ENCODE measurements at regions of chr15 and their contacts with region 1.

Region 1: DNA sequence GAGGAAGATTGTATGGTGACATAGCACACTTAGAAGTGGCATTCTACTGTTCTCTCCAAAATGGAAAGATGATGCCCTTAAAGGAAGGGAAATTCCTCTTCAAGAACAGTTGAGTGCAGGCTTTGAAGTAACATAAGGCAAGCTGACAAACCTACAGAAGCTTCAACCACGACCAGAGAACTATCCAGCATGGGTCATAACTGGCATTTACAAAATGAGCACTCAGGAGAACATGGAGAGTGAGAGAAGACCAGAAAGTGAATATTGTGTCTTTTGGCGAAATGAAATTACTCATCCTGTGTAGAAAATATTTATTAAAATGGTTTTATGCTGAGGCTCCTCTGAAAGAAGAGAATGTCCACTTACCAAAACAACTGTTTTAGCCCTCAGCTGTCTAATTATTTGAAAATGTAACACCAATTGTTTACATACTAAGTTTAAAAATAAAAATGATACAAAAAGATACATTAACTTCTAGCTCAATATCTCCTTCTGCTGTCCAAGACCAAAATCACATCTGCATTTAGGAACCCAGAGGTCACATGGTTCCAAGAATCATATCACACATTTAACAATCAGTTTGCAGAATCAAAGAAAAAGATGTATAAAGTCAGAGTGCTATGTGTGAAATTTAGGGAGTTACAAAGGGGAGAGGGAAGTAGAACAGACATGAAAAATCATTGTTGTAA is 216.9 kb downstream of the ATP8B4 start:
- DNase-seq: peak; percentile 22
- ATAC-seq: peak; percentile 37
- H3K4me3 ChIP-seq: no peak overlapping the region
- H3K27ac ChIP-seq: peak overlapping the region; percentile 53
- H3K4me1 ChIP-seq: peaks cover 27% of the 10 kb centered on the region
- H3K27me3 ChIP-seq: no peaks in the 10 kb centered on the region
- CTCF ChIP-seq: peak; percentile 65; the same call in 1 of the 2 replicates

Region 2: GRCh38 chr15:49235446-49236124 is 666.6 kb before region 1 on chr15:
- CTCF ChIA-PET with region 1: no interaction called
- POLR2A ChIA-PET with region 1: no interaction called
- intact Hi-C with region 1: loop called (anchors 5 kb)
- DNase-seq: peak; percentile 60
- ATAC-seq: peak; percentile 88
- H3K4me3 ChIP-seq: no peak overlapping the region
- H3K27ac ChIP-seq: 0 out of 2 replicates have a peak overlapping the region, but pooled peaks have one; percentile 10
- H3K4me1 ChIP-seq: peaks cover 5% of the 10 kb centered on the region; the same call in 1 of the 2 replicates
- H3K27me3 ChIP-seq: no peaks in the 10 kb centered on the region
- CTCF ChIP-seq: peak; percentile 81

Region 3: GRCh38 chr15:49370782-49371181 is 531.4 kb before region 1 on chr15:
- CTCF ChIA-PET with region 1: no interaction called
- POLR2A ChIA-PET with region 1: no interaction called
- intact Hi-C with region 1: loop called (anchors 2 kb)
- DNase-seq: peak; percentile 52
- ATAC-seq: peak; percentile 27; the same call in 1 of the 2 replicates
- H3K4me3 ChIP-seq: no peak overlapping the region
- H3K27ac ChIP-seq: no peak overlapping the region
- H3K4me1 ChIP-seq: no peaks in the 10 kb centered on the region
- H3K27me3 ChIP-seq: no peaks in the 10 kb centered on the region
- CTCF ChIP-seq: peak; percentile 58

Region 4: DNA sequence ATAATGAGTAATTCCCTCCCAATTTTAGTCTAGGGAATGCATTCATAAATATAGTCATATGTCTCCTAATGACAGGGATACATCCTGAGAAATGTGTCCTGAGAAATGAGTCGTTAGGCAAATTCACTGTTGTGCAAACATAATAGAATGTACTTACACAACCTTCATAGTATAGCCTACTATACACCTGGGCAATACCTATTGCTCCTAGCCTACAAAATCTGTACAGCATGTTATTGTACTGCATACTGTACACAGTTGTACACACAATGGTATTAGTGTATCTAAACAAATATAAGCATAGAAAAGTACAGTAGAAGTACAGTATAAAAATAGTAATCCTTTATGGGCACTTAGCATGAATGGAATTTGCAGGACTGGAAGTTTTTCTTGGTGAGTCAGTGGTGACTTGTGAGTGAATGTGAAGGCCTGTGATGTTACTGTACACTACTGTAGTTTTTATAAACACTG is 274.7 kb before region 1 on chr15:
- CTCF ChIA-PET with region 1: no interaction called
- POLR2A ChIA-PET with region 1: no interaction called
- intact Hi-C with region 1: loop called (anchors 2 kb)
- DNase-seq: peak; percentile 85
- ATAC-seq: peak; percentile 95
- H3K4me3 ChIP-seq: peak overlapping the region; percentile 9; the same call in 1 of the 2 replicates
- H3K27ac ChIP-seq: peak overlapping the region; percentile 90
- H3K4me1 ChIP-seq: peaks cover 20% of the 10 kb centered on the region
- H3K27me3 ChIP-seq: no peaks in the 10 kb centered on the region
- CTCF ChIP-seq: no peak

Region 5: DNA sequence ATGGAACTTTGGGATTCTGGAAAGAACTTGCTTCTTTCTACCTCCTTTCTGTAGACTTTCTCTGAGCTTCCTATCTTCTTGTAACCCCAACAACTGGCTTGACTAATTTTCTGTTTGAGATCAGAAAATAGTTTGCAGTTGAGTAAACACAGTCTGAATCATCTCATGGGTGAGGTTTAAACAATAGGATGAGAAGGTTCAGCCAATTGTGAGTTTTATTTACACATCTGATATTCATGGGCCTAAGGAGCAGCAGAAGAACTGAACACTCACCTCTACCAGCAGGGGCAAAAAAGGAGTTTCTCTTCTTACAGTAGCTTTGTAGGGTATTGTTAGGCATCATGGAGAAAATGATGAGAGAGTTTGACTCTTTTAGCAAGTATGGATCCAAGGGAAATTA is 227.1 kb before region 1 on chr15:
- CTCF ChIA-PET with region 1: no interaction called
- POLR2A ChIA-PET with region 1: no interaction called
- intact Hi-C with region 1: loop called (anchors 10 kb)
- DNase-seq: peak; percentile 88
- ATAC-seq: peak; percentile 98
- H3K4me3 ChIP-seq: peak overlapping the region; percentile 32; the same call in 1 of the 2 replicates
- H3K27ac ChIP-seq: peak overlapping the region; percentile 88
- H3K4me1 ChIP-seq: peaks cover 29% of the 10 kb centered on the region
- H3K27me3 ChIP-seq: no peaks in the 10 kb centered on the region
- CTCF ChIP-seq: peak; percentile 45; the same call in 1 of the 2 replicates

Region 6: DNA sequence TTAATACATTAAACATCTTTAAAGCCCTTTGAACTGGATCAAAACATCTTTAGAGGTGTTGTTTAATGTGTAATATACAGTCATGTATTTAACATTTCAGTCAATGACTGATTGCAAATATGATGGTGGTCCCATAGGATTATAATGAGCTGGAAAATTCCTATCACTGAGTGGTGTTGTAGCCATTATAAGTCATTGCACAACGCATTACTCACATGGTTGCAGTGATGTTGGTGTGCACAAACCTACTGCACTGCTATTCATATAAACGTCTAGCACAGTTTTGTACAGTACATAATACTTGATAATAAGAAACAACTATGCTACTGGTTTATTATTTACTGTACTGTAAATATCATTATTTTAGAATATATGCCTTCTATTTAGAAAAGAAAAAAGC is 205.7 kb before region 1 on chr15:
- CTCF ChIA-PET with region 1: no interaction called
- POLR2A ChIA-PET with region 1: no interaction called
- intact Hi-C with region 1: no loop called
- DNase-seq: no peak
- ATAC-seq: no peak
- H3K4me3 ChIP-seq: no peak overlapping the region
- H3K27ac ChIP-seq: no peak overlapping the region
- H3K4me1 ChIP-seq: no peaks in the 10 kb centered on the region
- H3K27me3 ChIP-seq: no peaks in the 10 kb centered on the region
- CTCF ChIP-seq: no peak

Region 7: GRCh38 chr15:49847937-49848823 is 54.0 kb before region 1 on chr15:
- CTCF ChIA-PET with region 1: no interaction called
- POLR2A ChIA-PET with region 1: no interaction called
- intact Hi-C with region 1: loop called (anchors 1 kb)
- DNase-seq: peak; percentile 95
- ATAC-seq: peak; percentile 84
- H3K4me3 ChIP-seq: peak overlapping the region; percentile 13; the same call in 1 of the 2 replicates
- H3K27ac ChIP-seq: peak overlapping the region; percentile 97
- H3K4me1 ChIP-seq: peaks cover 28% of the 10 kb centered on the region
- H3K27me3 ChIP-seq: no peaks in the 10 kb centered on the region
- CTCF ChIP-seq: no peak